OCI-LY7 (cell line): ENCODE measurements at regions of chr13 and their contacts with region 1.

Region 1: GRCh38 chr13:44577236-44578066 is 1.3 kb upstream of the TSC22D1 start:
- DNase-seq: peak; percentile 93
- H3K4me3 ChIP-seq: peak overlapping the region; percentile 91
- H3K27ac ChIP-seq: peak overlapping the region; percentile 78
- H3K4me1 ChIP-seq: peaks cover 26% of the 10 kb centered on the region
- CTCF ChIP-seq: no peak

Region 2: GRCh38 chr13:43878892-43879754 is 698.3 kb before region 1 on chr13 and contains the start of gene CCDC122:
- CTCF ChIA-PET with region 1: no interaction called
- POLR2A ChIA-PET with region 1: no interaction called
- intact Hi-C with region 1: loop called (anchors 5 kb)
- DNase-seq: peak; percentile 78
- H3K4me3 ChIP-seq: peak within 1 kb of the TSS; percentile 84
- H3K27ac ChIP-seq: peak within 1 kb of the TSS; percentile 48
- H3K4me1 ChIP-seq: peaks cover 42% of the 10 kb centered on the region
- CTCF ChIP-seq: no peak
- total RNA-seq, gene CCDC122: 4.0 and 4.6 TPM in 2 replicates

Region 3: GRCh38 chr13:44274452-44275205 is 302.8 kb before region 1 on chr13:
- CTCF ChIA-PET with region 1: no interaction called
- POLR2A ChIA-PET with region 1: no interaction called
- intact Hi-C with region 1: loop called (anchors 2 kb)
- DNase-seq: peak; percentile 79
- H3K4me3 ChIP-seq: peak overlapping the region; percentile 57
- H3K27ac ChIP-seq: peak overlapping the region; percentile 97
- H3K4me1 ChIP-seq: peaks cover 87% of the 10 kb centered on the region
- CTCF ChIP-seq: no peak

Region 4: DNA sequence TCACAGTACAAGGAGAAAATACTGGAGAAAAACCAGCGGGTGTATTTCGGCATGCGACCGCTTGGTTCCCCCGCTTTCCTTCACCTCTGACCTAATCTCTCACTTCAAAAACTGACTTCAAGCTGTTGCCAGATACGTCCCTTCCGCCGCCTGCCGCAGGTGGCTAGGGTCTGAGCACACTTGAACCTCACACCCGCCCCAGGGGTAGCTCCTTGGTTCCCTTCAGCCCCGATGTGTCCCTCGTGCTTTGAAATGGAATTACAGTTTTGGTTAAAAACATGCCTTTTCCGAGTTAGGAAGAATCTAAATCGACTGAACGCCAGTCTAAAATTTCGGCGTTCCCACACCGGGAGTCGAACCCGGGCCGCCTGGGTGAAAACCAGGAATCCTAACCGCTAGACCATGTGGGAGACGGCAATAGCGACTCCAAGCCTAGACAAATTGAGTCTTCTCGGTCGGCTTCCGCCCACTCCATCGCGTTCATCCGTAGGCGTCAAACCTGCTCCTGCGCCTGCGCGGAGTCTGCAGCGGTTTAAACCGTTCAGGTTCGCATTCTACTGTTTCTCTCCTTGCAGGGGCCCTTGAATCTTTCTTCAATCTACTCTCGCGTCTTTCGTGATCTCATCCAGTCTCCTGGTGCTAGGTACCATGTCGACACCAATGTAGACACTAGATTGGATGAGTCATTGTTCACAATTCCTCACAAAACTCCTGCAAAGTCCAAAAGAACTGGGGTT is 340.3 kb after region 1 on chr13:
- CTCF ChIA-PET with region 1: no interaction called
- POLR2A ChIA-PET with region 1: interaction called, 3 read pairs
- intact Hi-C with region 1: loop called (anchors 2 kb)
- DNase-seq: peak; percentile 97
- H3K4me3 ChIP-seq: peak overlapping the region; percentile 60
- H3K27ac ChIP-seq: peak overlapping the region; percentile 69
- H3K4me1 ChIP-seq: peaks cover 11% of the 10 kb centered on the region
- CTCF ChIP-seq: peak; percentile 59

Region 5: DNA sequence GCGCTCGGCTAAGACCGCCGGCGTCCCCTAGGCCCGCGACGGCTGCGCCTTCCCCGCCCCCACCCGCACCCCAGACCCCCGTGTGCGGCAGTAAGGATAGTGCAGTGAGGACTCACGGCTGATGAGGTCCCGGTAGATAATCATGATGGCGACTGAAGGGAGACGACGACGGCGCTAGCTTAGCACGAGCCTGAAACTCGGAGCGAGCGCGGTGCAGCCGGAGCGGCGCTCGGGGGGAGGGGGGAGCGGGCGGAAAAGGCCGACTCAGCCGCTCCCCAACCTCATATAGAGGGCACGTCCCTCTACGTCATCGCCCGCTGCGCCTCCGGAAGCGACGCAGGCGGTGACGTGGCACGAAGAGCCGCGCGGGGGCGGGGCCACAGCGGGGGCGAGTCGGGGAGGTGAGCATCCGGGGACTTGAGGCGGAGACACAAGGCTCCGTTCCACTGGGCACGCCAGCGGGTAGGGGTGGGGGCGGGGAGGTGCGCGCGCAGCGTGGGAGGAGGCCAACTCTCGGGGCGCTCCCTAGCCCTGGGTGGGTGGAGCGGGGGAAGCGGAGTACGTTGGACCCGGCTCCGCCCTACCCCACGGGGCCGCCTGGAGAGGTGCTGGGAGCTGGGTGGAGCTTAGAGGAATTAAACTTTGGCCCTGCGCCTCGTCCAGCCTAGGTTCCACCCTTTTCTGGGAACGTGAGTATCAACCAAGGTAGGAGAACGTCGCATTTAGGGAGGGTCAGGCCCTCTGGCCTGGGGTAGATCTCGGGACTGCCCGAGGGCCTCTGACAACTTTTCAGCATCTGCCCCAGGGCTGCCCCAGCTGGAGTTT is 763.7 kb after region 1 on chr13 and contains the start of gene TPT1:
- CTCF ChIA-PET with region 1: no interaction called
- POLR2A ChIA-PET with region 1: no interaction called
- intact Hi-C with region 1: loop called (anchors 2 kb)
- DNase-seq: peak; percentile 98
- H3K4me3 ChIP-seq: peak within 1 kb of the TSS; percentile 82
- H3K27ac ChIP-seq: peak within 1 kb of the TSS; percentile 78
- H3K4me1 ChIP-seq: peaks cover 40% of the 10 kb centered on the region
- CTCF ChIP-seq: no peak
- total RNA-seq, gene TPT1: 1,996 and 2,481 TPM in 2 replicates